ENCODE measurements at regions of chr11 and their contacts with region 1.

Region 1: DNA sequence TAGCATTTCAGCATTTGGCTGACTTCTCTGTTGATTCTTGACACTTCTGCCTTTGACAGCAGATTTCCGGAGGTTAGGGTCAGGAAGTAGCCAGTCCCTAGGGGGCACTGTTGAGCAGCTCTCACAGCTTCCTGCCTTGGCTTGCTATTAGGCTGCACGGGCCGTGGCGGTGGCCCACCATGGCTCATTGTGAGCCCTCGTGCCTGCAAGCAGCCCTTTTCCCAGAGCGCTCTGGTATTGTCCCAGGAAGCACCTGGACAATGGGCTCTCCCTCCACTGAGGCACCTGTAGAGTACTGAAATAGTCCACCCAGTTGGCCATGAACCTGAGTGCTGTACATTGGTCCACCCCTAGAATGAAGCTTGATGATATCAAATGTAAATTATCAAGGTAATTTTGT is 100.2 kb upstream of the GAL start:
- DNase-seq: peak; percentile 59 to 72
- ATAC-seq: peak in 2 of 4 donors; percentile 17 to 36
- H3K4me3 ChIP-seq: no peak overlapping the region
- H3K27ac ChIP-seq: peak overlapping the region; percentile 89
- H3K4me1 ChIP-seq: peaks cover 48% of the 10 kb centered on the region
- H3K27me3 ChIP-seq: no peaks in the 10 kb centered on the region
- CTCF ChIP-seq: peak; percentile 35

Region 2: GRCh38 chr11:68459886-68460740 is 124.0 kb before region 1 on chr11:
- intact Hi-C with region 1: loop called (anchors 5 kb)
- DNase-seq: peak; percentile 96 to 97
- ATAC-seq: peak; percentile 90 to 92 (median 92)
- H3K4me3 ChIP-seq: peak overlapping the region; percentile 94
- H3K27ac ChIP-seq: peak overlapping the region; percentile 99
- H3K4me1 ChIP-seq: peaks cover 32% of the 10 kb centered on the region
- H3K27me3 ChIP-seq: no peaks in the 10 kb centered on the region
- CTCF ChIP-seq: no peak

Region 3: GRCh38 chr11:68468217-68468828 is 115.8 kb before region 1 on chr11:
- intact Hi-C with region 1: loop called (anchors 5 kb)
- DNase-seq: no peak
- ATAC-seq: no peak
- H3K4me3 ChIP-seq: no peak overlapping the region
- H3K27ac ChIP-seq: no peak overlapping the region
- H3K4me1 ChIP-seq: peaks cover 95% of the 10 kb centered on the region
- H3K27me3 ChIP-seq: no peaks in the 10 kb centered on the region
- CTCF ChIP-seq: no peak

Measured in psoas muscle (tissue), 8 donors.